Activated CD8-positive, alpha-beta T cell treated with anti-CD3 and anti-CD28 coated beads, Interleukin-2, amount 10 ng/mL, durations not matched to agents 7 days and 5 days (primary cell): ENCODE measurements at regions of chr12 and their contacts with region 1.

Region 1: DNA sequence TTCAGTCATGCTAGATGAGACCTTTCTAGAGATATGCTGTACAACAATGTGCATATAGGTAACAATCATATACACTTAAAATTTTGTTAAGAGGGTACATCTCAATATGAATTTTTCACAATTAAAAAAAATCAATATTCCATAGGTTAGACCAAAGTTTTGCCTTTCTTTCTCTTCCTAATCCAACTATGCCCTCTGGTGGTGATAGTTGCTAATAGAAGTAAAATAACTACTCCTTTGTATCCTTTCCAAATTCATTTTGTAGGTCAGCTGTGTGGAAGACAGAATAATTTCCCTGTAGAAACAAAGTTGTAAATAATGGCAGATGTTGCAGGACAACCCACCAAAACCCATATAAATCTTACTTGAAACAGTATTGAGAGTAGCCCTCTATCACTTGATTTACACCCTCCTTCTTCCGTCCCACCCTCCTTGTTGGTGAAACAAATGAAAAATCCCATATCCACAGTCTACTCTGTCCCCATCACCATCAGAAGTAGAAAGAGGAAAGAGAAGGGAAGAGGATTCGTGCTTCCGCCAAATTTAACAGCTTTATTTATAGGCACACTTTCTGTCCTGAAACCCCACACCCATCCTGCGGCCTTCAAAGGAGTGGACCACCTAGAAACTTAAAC is 34.2 kb upstream of the KICS2 start:
- DNase-seq: no peak
- ATAC-seq: no peak
- H3K4me3 Mint-ChIP-seq: no peak overlapping the region
- H3K27ac Mint-ChIP-seq: no peak overlapping the region
- H3K4me1 Mint-ChIP-seq: no peaks in the 10 kb centered on the region
- H3K27me3 Mint-ChIP-seq: no peaks in the 10 kb centered on the region

Region 2: DNA sequence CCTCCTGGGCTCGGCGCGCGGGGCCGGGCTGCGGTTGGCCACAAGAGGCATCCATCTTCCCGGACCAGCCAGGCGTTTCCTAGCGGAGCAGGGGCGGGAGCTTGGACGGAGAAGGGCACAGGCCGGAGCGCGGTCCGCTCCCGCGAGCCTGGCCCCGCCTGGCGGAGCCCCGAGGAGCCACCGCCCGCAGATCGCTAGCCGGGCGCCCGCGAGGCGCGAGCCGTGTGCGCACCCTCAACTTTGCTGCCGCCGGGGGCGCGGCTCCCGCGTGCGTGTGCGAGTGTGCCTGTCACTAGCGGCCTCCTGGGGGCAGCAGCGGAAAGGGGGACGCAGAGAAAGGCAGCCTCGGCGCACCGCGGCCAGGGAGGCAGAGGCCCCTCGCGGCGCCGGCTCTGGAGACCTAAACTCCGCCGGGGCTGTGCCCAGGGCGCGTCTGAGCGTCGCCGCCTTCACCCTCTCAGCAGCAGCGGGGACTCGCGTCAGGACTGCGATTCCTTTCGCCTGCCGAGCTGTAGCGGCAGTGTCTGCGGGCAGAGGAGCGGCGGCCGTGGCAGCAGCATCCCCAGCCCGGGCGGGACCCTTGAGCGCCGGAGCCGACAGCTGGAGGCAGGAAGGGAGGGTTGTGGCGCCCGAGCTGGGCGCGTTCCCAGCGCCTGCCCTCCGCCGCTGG is 412.4 kb before region 1 on chr12:
- CTCF ChIA-PET with region 1: interaction called, 19 read pairs
- POLR2A ChIA-PET with region 1: no interaction called
- DNase-seq: peak; percentile 85
- ATAC-seq: peak; percentile 98
- H3K4me3 Mint-ChIP-seq: peak overlapping the region; percentile 68
- H3K27ac Mint-ChIP-seq: no peak overlapping the region
- H3K4me1 Mint-ChIP-seq: peaks cover 8% of the 10 kb centered on the region
- H3K27me3 Mint-ChIP-seq: peaks cover 37% of the 10 kb centered on the region

Region 3: GRCh38 chr12:64691795-64692583 is 435.7 kb after region 1 on chr12:
- CTCF ChIA-PET with region 1: no interaction called
- POLR2A ChIA-PET with region 1: no interaction called
- DNase-seq: no peak
- ATAC-seq: no peak
- H3K4me3 Mint-ChIP-seq: no peak overlapping the region
- H3K27ac Mint-ChIP-seq: peak overlapping the region; percentile 26
- H3K4me1 Mint-ChIP-seq: peaks cover 66% of the 10 kb centered on the region
- H3K27me3 Mint-ChIP-seq: no peaks in the 10 kb centered on the region